Right cardiac atrium (tissue), 5 donors: ENCODE measurements at regions of chr10 and their contacts with region 1.

Region 1: GRCh38 chr10:103888113-103888841 is 29.7 kb downstream of the STN1 start:
- DNase-seq: peak; percentile 72 to 80 (median 78)
- ATAC-seq: peak; percentile 59 to 74
- H3K4me3 ChIP-seq: no peak overlapping the region
- H3K27ac ChIP-seq: peak overlapping the region; percentile 26
- H3K4me1 ChIP-seq: peaks cover 2% of the 10 kb centered on the region
- H3K27me3 ChIP-seq: no peaks in the 10 kb centered on the region

Region 2: DNA sequence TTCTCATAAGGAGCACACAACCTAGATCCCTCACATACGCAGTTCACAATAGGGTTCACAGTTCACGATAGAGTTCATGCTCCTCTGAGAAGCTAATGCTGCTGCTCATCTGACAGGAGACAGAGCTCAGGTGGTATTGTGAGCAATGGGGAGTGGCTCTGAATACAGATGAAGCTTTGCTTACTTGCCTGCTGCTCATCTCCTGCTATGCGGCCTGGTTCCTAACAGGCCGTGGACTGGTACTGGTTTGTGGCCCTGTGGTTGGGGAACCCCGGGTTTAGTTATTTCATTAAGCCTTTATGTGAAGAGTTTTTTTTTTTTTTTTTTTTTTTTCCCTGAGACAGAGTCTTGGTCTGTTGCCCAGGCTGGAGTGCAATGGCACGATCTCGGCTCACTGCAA is 98.1 kb after region 1 on chr10:
- intact Hi-C with region 1: loop called in 1 of 4 experiments (anchors 5 kb)
- DNase-seq: no peak
- ATAC-seq: peak in 1 of 2 donors; percentile 29
- H3K4me3 ChIP-seq: no peak overlapping the region
- H3K27ac ChIP-seq: no peak overlapping the region
- H3K4me1 ChIP-seq: peaks cover 8% of the 10 kb centered on the region
- H3K27me3 ChIP-seq: no peaks in the 10 kb centered on the region

Region 3: GRCh38 chr10:104002911-104003310 is 114.6 kb after region 1 on chr10:
- intact Hi-C with region 1: loop called in 1 of 4 experiments (anchors 10 kb)
- DNase-seq: no peak
- ATAC-seq: no peak
- H3K4me3 ChIP-seq: no peak overlapping the region
- H3K27ac ChIP-seq: no peak overlapping the region
- H3K4me1 ChIP-seq: no peaks in the 10 kb centered on the region
- H3K27me3 ChIP-seq: no peaks in the 10 kb centered on the region

Region 4: DNA sequence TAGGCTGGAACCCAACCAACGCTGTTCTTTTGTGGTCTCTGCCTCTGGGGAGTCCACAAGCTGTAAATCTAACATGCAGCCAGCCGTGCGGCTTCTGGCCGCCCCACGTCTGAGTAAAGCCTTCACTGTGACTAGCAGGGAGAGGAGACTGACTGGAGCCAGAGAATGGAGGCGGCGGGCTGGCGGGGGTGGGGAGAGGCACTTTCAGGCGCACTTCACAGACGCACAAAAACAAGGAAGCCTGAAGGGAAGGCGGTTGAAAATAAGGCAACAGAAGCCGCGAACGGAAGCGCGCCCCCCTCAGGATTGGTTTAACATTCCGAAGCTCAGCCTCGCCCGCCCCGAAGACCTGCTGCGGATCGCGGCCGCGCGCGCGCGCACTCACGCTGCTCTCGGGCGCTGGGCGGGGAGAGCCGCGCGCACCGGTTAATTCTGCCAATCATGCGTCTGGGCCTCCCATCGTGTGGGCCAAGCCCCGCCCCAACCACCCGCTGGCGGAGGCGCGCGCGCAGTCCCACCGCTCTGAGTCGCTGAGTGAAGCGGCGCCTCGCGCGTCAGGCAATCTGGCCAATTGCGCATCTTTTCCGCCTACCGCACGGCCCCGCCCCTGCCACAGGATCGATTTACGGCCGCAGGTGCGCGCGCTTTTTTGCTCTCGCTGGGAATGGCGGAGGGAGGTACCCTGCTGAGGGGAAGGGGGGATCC is 233.4 kb after region 1 on chr10 and contains the start of gene SFR1:
- intact Hi-C with region 1: loop called in 2 of 4 experiments (anchors 5 to 10 kb)
- DNase-seq: peak; percentile 99 to 100 (median 100)
- ATAC-seq: peak; percentile 96 to 97
- H3K4me3 ChIP-seq: peak within 1 kb of the TSS; percentile 74
- H3K27ac ChIP-seq: peak within 1 kb of the TSS; percentile 98
- H3K4me1 ChIP-seq: no peaks in the 10 kb centered on the region
- H3K27me3 ChIP-seq: no peaks in the 10 kb centered on the region
- total RNA-seq, gene SFR1: 7.0 to 8.4 (median 7.3) TPM

Region 5: DNA sequence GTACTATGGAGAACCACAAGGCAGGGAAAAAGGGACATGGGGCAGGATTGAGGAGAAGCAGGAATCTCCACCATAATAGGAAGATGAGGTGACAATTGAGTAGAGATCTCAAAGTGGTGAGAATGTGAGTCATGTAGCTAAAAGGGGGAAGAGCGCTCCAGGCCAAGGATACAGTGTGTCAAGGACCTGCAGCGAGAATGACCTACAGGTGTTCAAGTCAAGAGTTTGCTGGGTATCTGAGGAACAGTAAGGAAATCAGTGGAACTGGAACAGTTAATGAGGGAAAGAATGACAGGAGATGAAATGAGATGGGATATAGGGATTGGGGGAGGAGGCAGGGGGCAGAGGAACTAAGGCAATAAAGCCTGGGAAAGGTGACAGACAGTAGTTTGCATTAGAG is 267.3 kb after region 1 on chr10:
- intact Hi-C with region 1: no loop called
- DNase-seq: no peak
- ATAC-seq: no peak
- H3K4me3 ChIP-seq: no peak overlapping the region
- H3K27ac ChIP-seq: no peak overlapping the region
- H3K4me1 ChIP-seq: no peaks in the 10 kb centered on the region
- H3K27me3 ChIP-seq: no peaks in the 10 kb centered on the region

Region 6: DNA sequence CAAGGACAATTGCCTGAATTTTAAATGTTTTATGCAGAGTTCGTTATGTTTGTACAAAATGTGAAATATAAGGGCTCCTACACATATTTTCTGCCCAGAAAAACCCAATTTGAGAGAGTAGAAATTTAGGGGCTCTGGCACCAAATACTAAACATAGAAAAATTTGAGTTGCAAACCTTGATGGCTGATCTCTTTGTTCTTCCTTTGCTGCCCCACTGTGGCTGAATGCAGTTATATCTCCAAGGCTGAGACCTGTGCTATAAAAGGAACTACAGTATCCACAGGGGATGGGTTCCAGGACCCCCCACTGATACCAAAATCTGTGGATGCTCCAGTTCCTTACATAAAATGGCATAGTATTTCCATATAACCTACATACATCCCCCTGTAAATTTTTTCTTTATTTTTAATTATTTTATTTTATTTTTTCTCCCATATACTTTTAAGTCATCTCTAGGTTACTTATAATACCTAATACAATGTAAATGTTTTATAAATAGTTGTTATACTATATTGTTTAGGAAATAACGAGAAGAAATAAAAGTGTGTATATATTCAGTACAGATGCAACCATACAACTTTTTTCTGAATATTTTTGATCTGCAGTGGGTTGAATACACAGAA is 321.4 kb after region 1 on chr10:
- intact Hi-C with region 1: loop called in 3 of 4 experiments (anchors 5 to 10 kb)
- DNase-seq: no peak
- ATAC-seq: peak; percentile 45 to 70
- H3K4me3 ChIP-seq: no peak overlapping the region
- H3K27ac ChIP-seq: no peak overlapping the region
- H3K4me1 ChIP-seq: no peaks in the 10 kb centered on the region
- H3K27me3 ChIP-seq: no peaks in the 10 kb centered on the region